CD8-positive, alpha-beta T cell (primary cell): ENCODE measurements at regions of chr22 and their contacts with region 1.

Region 1: DNA sequence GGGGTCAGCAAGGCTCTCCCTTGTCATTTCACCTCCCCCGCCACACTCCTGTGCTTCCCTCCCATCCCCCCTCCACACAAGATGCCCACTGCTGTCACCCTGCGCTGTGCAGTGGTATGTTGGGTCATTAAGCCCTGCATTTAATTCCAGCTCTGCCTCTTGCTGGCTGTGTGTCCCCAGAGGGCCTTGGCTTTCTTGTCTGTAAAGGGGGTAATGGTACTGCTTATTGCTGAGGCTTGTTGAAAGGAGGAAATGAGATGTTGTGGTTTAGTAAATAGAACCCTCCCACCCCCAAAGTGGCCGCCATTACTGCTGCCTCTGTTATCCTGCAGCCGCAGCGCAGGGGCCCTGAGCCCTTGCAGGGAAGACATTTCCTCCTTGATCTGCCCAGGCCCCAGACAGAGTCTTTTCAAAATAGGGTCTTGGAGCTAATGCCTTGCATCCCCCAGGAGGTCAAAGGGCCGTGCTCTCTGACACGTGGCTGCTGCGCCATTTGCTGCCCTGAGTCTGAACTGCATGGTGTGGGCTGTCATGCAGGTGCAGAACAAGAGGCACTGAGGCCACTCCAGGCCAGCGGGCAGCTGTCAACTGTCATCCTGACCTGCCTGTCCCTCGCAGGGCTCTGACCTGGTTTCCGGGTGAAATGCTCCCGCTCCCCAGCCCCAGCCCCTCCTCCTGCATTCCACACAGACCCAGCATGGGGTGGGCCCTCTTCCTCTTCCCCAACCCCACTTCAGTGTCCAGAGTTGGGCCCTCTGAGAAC is 18.7 kb downstream of the PVALB start:
- DNase-seq: no peak
- ATAC-seq: no peak
- H3K4me3 ChIP-seq: no peak overlapping the region
- H3K4me3 Mint-ChIP-seq: no peak overlapping the region
- H3K27ac ChIP-seq: no peak overlapping the region
- H3K27ac Mint-ChIP-seq: no peak overlapping the region
- H3K4me1 ChIP-seq: no peaks in the 10 kb centered on the region
- H3K4me1 Mint-ChIP-seq: no peaks in the 10 kb centered on the region
- H3K27me3 ChIP-seq: no peaks in the 10 kb centered on the region
- H3K27me3 Mint-ChIP-seq: peaks cover 8% of the 10 kb centered on the region
- CTCF ChIP-seq: no peak

Region 2: DNA sequence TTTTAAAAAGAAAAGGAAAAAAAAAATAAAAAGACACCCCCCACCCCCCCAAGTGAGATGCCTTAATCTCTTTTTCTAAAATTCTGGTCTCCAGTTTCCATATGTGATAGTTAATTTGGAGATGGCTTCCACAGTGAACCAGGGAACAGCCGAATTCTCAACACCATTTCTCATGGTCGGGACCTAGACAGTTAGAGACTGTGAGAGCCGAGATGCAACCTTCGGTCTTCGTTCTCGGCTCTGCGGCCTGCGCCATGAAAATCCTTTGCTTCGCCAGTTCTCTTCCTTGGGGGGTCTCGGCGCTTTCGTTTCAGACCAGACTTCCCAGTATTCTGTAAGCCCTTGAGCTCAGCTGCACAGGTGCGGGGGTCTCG is 95.3 kb before region 1 on chr22:
- CTCF ChIA-PET with region 1: no interaction called
- POLR2A ChIA-PET with region 1: no interaction called
- intact Hi-C with region 1: no loop called
- DNase-seq: no peak
- ATAC-seq: no peak
- H3K4me3 ChIP-seq: no peak overlapping the region
- H3K4me3 Mint-ChIP-seq: no peak overlapping the region
- H3K27ac ChIP-seq: no peak overlapping the region
- H3K27ac Mint-ChIP-seq: no peak overlapping the region
- H3K4me1 ChIP-seq: no peaks in the 10 kb centered on the region
- H3K4me1 Mint-ChIP-seq: peaks cover 6% of the 10 kb centered on the region
- H3K27me3 ChIP-seq: peaks cover 10 to 32% of the 10 kb centered on the region in 2 experiments
- H3K27me3 Mint-ChIP-seq: peaks cover 80% of the 10 kb centered on the region
- CTCF ChIP-seq: no peak

Region 3: GRCh38 chr22:36839356-36840073 is 41.4 kb after region 1 on chr22:
- CTCF ChIA-PET with region 1: no interaction called
- POLR2A ChIA-PET with region 1: no interaction called
- intact Hi-C with region 1: loop called in 1 of 2 experiments (anchors 5 kb)
- DNase-seq: no peak
- ATAC-seq: no peak
- H3K4me3 ChIP-seq: no peak overlapping the region
- H3K4me3 Mint-ChIP-seq: no peak overlapping the region
- H3K27ac ChIP-seq: no peak overlapping the region
- H3K27ac Mint-ChIP-seq: no peak overlapping the region
- H3K4me1 ChIP-seq: no peaks in the 10 kb centered on the region
- H3K4me1 Mint-ChIP-seq: no peaks in the 10 kb centered on the region
- H3K27me3 ChIP-seq: peaks cover 0 to 4% of the 10 kb centered on the region in 2 experiments
- H3K27me3 Mint-ChIP-seq: peaks cover 46% of the 10 kb centered on the region
- CTCF ChIP-seq: no peak